AG04450 (cell line): ENCODE measurements at regions of chr13 and their contacts with region 1.

Region 1: GRCh38 chr13:108961542-108962125 is 332.2 kb downstream of the MYO16 start:
- DNase-seq: no peak
- H3K4me3 ChIP-seq: no peak overlapping the region
- H3K27ac ChIP-seq: no peak overlapping the region
- H3K27me3 ChIP-seq: no peaks in the 10 kb centered on the region
- CTCF ChIP-seq: peak; percentile 82

Region 2: DNA sequence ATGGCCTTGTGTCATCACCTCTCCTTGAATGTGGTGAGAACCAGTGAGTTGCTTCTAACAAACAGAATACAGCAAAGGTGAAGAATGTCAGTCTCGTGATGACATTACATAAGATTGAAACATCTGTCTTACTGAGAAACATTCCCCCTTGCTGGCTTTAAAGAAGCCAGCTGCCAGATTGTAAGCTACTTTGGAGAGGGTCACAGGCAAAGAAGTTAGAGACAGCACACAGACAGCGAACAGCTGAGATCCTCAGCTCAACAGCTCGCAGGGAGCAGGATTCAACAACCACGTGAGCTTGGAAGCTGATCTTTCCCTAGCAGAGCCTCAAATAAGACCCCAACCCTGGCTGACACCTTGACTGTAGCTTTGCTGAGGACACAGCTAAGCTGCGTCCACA is 1114.2 kb before region 1 on chr13:
- CTCF ChIA-PET with region 1: no interaction called
- POLR2A ChIA-PET with region 1: no interaction called
- DNase-seq: no peak
- H3K4me3 ChIP-seq: no peak overlapping the region
- H3K27ac ChIP-seq: no peak overlapping the region
- H3K27me3 ChIP-seq: no peaks in the 10 kb centered on the region
- CTCF ChIP-seq: no peak

Region 3: GRCh38 chr13:109145631-109146030 is 184.0 kb after region 1 on chr13:
- CTCF ChIA-PET with region 1: interaction called, 10 read pairs
- POLR2A ChIA-PET with region 1: no interaction called
- DNase-seq: peak; percentile 44
- H3K4me3 ChIP-seq: no peak overlapping the region
- H3K27ac ChIP-seq: no peak overlapping the region
- H3K27me3 ChIP-seq: peaks cover 3% of the 10 kb centered on the region
- CTCF ChIP-seq: peak; percentile 95

Region 4: DNA sequence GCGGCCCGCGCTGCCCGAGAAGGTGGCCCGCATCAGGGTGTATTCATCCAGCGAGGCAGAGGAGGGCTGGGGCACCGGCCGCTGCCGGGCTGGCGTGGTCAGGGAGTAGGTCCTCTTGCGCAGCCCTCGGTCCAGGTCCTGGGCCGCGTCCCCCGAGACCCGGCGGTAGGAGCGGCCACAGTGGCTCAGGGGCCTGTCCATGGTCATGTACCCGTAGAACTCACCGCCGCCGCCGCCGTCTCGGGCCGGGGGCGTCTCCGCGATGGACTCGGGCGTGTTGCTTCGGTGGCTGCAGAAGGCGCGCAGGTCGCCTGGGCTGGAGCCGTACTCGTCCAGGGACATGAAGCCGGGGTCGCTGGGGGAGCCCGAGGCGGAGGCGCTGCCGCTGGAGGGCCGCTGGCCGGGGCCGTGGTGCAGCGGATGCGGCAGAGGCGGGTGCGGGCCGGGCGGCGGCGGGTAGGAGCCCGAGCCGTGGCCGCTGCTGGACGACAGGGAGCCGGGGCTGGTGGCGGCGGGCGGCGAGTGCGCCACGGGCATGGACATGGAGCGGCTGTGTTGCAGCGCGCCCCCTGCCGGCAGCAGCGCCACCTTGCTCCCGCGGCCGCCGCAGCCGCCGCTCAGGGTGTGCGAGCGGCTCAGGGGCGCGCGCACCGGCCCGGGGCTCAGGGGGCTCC is 822.7 kb after region 1 on chr13:
- CTCF ChIA-PET with region 1: interaction called, 16 read pairs
- POLR2A ChIA-PET with region 1: no interaction called
- DNase-seq: no peak
- H3K4me3 ChIP-seq: peak overlapping the region; percentile 65; the same call in 1 of the 2 replicates
- H3K27ac ChIP-seq: no peak overlapping the region
- H3K27me3 ChIP-seq: peaks cover 3% of the 10 kb centered on the region
- CTCF ChIP-seq: peak; percentile 43

Region 5: GRCh38 chr13:110116072-110116487 is 1154.4 kb after region 1 on chr13:
- CTCF ChIA-PET with region 1: interaction called, 13 read pairs
- POLR2A ChIA-PET with region 1: no interaction called
- DNase-seq: no peak
- H3K4me3 ChIP-seq: no peak overlapping the region
- H3K27ac ChIP-seq: no peak overlapping the region
- H3K27me3 ChIP-seq: no peaks in the 10 kb centered on the region
- CTCF ChIP-seq: peak; percentile 88